CD4-positive, alpha-beta memory T cell (primary cell): ENCODE measurements at regions of chr2 and their contacts with region 1.

Region 1: GRCh38 chr2:234425619-234426603 is 71.0 kb downstream of the ARL4C start:
- DNase-seq: peak; percentile 90 to 95 (median 91)
- H3K4me3 ChIP-seq: peak overlapping the region; percentile 19 to 33
- H3K4me3 Mint-ChIP-seq: peak overlapping the region; percentile 70 to 90 (median 82)
- H3K27ac ChIP-seq: peak overlapping the region; percentile 88
- H3K27ac Mint-ChIP-seq: peak overlapping the region; percentile 95 to 100 (median 100)
- H3K4me1 ChIP-seq: peaks cover 100% of the 10 kb centered on the region
- H3K4me1 Mint-ChIP-seq: peaks cover 66 to 96% (median 82%) of the 10 kb centered on the region in 4 donors
- H3K27me3 ChIP-seq: no peaks in the 10 kb centered on the region
- H3K27me3 Mint-ChIP-seq: no peaks in the 10 kb centered on the region

Region 2: DNA sequence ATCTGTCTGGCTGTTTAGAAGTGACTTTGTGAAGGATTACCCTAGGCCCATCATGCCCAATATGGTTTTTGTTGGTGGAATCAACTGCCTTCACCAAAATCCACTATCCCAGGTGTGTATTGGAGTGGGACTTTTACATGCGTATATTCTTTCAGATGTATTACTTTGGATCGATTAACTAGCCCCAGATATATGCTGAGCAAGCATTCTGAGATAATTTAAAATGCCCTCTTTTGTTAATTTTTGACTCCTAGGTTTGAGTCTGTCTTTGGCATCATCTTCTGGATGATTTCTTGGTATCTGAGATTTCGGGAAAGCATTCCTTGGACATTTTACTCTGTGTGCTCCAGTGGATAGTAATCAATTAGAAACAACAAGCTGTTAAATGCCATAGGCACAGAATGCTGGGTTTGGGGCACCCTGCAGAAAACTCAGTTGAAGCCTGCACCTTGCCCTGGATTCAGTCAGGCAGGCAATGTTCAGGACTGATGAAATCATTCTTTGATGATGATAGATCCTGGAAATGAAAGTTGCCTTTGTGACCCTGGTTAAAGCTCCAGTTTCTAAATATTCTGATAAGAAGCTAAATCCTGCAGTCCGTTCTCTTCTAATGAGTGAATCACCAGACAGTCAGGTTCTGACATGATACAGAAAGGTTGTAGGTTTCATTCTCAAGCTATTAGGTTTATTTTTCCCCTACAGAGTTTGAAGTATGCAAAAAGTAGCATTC is 664.7 kb before region 1 on chr2:
- CTCF ChIA-PET with region 1: no interaction called
- POLR2A ChIA-PET with region 1: no interaction called
- intact Hi-C with region 1: no loop called
- DNase-seq: no peak
- H3K4me3 ChIP-seq: no peak overlapping the region
- H3K4me3 Mint-ChIP-seq: no peak overlapping the region
- H3K27ac ChIP-seq: no peak overlapping the region
- H3K27ac Mint-ChIP-seq: no peak overlapping the region
- H3K4me1 ChIP-seq: no peaks in the 10 kb centered on the region
- H3K4me1 Mint-ChIP-seq: no peaks in the 10 kb centered on the region
- H3K27me3 ChIP-seq: no peaks in the 10 kb centered on the region
- H3K27me3 Mint-ChIP-seq: peaks cover 8 to 12% of the 10 kb centered on the region in 2 donors

Region 3: DNA sequence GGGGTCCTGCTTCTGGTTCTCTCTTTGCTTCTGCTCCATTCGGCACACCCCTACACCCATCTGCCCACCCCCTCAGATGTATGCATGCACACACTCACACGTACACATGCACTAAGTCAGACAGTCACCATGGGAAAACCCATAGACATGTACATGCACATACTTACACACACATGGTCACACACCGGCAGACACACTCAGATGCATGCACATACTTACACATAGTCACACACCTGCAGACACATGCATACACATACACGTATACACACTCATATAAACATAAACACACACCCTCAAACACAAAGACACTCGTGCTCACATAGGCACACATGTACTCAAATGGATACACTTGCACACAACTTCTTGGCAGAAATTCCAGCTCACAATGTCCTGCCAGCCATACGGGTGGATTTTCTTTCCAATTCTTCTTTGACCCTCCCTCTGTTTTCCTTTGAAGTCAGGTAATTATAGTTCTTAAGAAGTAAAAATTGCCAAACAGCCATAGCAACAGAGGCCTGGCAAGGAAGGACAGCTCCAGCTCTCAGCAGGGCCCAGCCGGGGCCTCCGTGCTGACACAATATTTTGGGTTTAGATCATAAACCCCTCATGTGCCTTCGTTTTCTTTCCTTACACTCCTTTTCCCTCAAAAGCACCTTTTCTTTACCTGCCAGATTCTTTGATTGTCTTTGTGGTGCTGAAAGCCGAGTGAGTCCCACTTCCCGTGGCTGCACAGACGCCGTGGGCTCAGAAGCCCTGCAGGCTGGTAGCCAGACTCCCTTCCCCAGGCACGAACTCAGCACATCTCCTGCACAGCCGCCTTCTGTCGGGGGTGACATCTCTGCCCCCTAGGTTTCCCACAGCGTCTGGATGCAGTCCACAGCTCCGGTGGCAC is 124.7 kb before region 1 on chr2:
- CTCF ChIA-PET with region 1: no interaction called
- POLR2A ChIA-PET with region 1: interaction called, 313 read pairs
- intact Hi-C with region 1: loop called (anchors 5 kb)
- DNase-seq: no peak
- H3K4me3 ChIP-seq: no peak overlapping the region
- H3K4me3 Mint-ChIP-seq: peak overlapping the region; percentile 25 to 76 (median 63)
- H3K27ac ChIP-seq: peak overlapping the region; percentile 7
- H3K27ac Mint-ChIP-seq: peak overlapping the region; percentile 48 to 94 (median 75)
- H3K4me1 ChIP-seq: peaks cover 49% of the 10 kb centered on the region
- H3K4me1 Mint-ChIP-seq: peaks cover 42 to 67% (median 60%) of the 10 kb centered on the region in 4 donors
- H3K27me3 ChIP-seq: no peaks in the 10 kb centered on the region
- H3K27me3 Mint-ChIP-seq: no peaks in the 10 kb centered on the region

Region 4: DNA sequence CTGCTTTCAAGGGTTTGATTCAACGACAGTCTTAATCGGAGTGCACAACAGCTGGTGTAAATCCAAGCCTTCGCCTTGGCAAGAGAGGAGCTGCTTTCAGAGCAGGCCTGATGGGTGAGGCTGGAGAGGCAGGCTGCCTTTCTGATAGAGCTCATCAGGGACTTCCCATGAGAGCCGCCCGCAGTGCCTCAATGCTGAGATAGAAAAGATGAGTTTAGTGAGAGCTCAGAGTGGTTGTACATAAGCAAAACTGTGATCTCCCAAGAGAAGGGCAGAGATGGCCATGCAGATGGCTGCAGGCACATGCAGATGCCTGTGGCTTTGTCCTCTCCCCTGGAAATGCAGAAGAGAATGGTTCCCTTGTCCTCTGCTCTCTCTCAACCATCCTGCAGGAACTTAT is 51.2 kb before region 1 on chr2:
- CTCF ChIA-PET with region 1: interaction called, 4 read pairs
- POLR2A ChIA-PET with region 1: interaction called, 42 read pairs
- intact Hi-C with region 1: loop called (anchors 2 kb)
- DNase-seq: no peak
- H3K4me3 ChIP-seq: no peak overlapping the region
- H3K4me3 Mint-ChIP-seq: no peak overlapping the region
- H3K27ac ChIP-seq: no peak overlapping the region
- H3K27ac Mint-ChIP-seq: peak overlapping the region in 4 of 7 donors; percentile 43 to 76 (median 63)
- H3K4me1 ChIP-seq: peaks cover 41% of the 10 kb centered on the region
- H3K4me1 Mint-ChIP-seq: peaks cover 24 to 60% (median 39%) of the 10 kb centered on the region in 4 donors
- H3K27me3 ChIP-seq: no peaks in the 10 kb centered on the region
- H3K27me3 Mint-ChIP-seq: no peaks in the 10 kb centered on the region

Region 5: DNA sequence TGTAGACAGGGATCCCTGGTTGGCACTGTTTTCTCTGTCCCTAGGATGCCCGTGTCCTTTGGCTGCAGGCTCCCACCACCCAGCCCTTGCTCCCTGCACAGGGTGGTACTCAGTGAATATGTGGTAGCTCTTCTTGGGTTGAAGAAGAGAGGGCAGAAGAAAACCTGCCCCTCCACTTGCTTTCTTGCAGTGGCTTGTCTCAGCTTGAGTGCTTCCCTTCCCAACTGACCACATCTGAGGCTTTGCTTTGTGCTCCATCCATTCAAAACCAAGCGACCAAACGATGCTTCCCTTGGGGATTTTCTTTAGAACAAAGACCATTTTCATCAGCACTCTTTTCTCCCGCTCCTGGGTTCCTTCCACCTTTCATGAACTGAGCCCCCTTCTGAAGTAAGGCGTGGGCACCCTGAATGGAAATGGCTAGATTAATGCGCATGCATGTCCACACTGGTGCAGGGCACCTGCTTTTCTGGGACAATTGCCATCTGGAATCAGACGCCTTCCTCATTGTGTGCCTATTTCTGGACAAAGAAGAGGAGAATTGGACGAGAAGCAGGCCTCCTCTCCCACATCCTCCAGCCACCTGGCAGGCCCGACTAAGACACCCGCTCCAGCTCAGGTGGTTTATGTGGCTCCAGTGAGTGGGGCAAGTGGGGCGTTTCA is 11.9 kb after region 1 on chr2:
- CTCF ChIA-PET with region 1: interaction called, 3 read pairs
- POLR2A ChIA-PET with region 1: interaction called, 20 read pairs
- intact Hi-C with region 1: no loop called
- DNase-seq: no peak
- H3K4me3 ChIP-seq: no peak overlapping the region
- H3K4me3 Mint-ChIP-seq: peak overlapping the region in 3 of 8 donors; percentile 6 to 43 (median 22)
- H3K27ac ChIP-seq: no peak overlapping the region
- H3K27ac Mint-ChIP-seq: peak overlapping the region in 2 of 7 donors; percentile 68 to 88
- H3K4me1 ChIP-seq: peaks cover 72% of the 10 kb centered on the region
- H3K4me1 Mint-ChIP-seq: peaks cover 46 to 88% (median 65%) of the 10 kb centered on the region in 4 donors
- H3K27me3 ChIP-seq: no peaks in the 10 kb centered on the region
- H3K27me3 Mint-ChIP-seq: no peaks in the 10 kb centered on the region

Region 6: GRCh38 chr2:234463626-234464290 is 37.8 kb after region 1 on chr2:
- CTCF ChIA-PET with region 1: interaction called, 8 read pairs
- POLR2A ChIA-PET with region 1: interaction called, 743 read pairs
- intact Hi-C with region 1: loop called (anchors 1 kb)
- DNase-seq: peak; percentile 83 to 90 (median 87)
- H3K4me3 ChIP-seq: peak overlapping the region; percentile 12 to 48
- H3K4me3 Mint-ChIP-seq: peak overlapping the region; percentile 69 to 86 (median 81)
- H3K27ac ChIP-seq: peak overlapping the region; percentile 86
- H3K27ac Mint-ChIP-seq: peak overlapping the region; percentile 88 to 99 (median 97)
- H3K4me1 ChIP-seq: peaks cover 81% of the 10 kb centered on the region
- H3K4me1 Mint-ChIP-seq: peaks cover 49 to 94% (median 73%) of the 10 kb centered on the region in 4 donors
- H3K27me3 ChIP-seq: no peaks in the 10 kb centered on the region
- H3K27me3 Mint-ChIP-seq: no peaks in the 10 kb centered on the region

Region 7: GRCh38 chr2:234488913-234489451 is 63.1 kb after region 1 on chr2:
- CTCF ChIA-PET with region 1: interaction called, 20 read pairs
- POLR2A ChIA-PET with region 1: interaction called, 266 read pairs
- intact Hi-C with region 1: loop called (anchors 1 kb)
- DNase-seq: peak; percentile 81 to 94 (median 84)
- H3K4me3 ChIP-seq: peak overlapping the region in 1 of 2 donors; percentile 25
- H3K4me3 Mint-ChIP-seq: peak overlapping the region; percentile 84 to 100 (median 98)
- H3K27ac ChIP-seq: peak overlapping the region; percentile 98
- H3K27ac Mint-ChIP-seq: peak overlapping the region; percentile 97 to 100 (median 99)
- H3K4me1 ChIP-seq: peaks cover 87% of the 10 kb centered on the region
- H3K4me1 Mint-ChIP-seq: peaks cover 63 to 94% (median 81%) of the 10 kb centered on the region in 4 donors
- H3K27me3 ChIP-seq: no peaks in the 10 kb centered on the region
- H3K27me3 Mint-ChIP-seq: no peaks in the 10 kb centered on the region